ENCODE measurements at regions of chr2 and their contacts with region 1.

Region 1: DNA sequence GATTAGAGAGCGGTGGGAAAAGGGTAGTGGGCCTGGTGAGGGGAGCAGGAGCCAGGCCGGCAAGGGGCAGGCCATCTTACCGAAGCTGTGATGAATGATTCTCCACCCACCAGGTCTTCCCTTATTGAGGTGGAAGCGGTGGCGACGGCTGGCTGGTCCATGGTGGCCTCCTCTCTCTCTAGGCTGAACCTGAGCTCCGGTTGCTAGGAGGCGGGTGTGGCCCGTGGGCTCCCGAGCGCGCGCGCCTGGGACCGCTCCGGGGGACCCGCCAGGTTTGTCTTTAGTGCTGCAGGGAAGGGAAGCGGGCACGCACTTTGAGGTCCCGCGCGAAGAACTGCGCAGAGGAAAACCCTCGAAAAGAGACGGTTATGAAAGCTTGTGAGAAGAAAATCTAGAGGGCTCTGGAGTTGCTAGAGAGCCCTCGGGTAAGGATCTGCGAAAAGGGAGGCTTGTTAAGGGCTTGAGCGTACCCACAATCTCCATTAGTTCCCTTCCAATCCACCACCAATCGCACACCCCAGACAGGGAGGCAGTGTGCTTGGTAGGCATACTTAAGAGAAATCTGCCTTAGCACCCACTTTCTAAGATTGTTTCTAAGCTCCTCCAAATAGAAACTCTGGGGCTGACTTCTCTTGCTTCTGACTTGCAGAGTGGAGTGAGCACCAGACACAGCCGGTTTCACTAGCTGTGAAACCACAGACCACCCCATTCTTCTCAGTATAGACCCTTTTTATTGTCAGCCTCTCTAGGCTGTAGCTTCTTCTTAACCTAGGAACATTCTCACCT is at the start of gene STPG4:
- DNase-seq: no peak
- total RNA-seq, gene STPG4: 0.52 TPM in 1 of 2 donors, not detected in the other

Region 2: DNA sequence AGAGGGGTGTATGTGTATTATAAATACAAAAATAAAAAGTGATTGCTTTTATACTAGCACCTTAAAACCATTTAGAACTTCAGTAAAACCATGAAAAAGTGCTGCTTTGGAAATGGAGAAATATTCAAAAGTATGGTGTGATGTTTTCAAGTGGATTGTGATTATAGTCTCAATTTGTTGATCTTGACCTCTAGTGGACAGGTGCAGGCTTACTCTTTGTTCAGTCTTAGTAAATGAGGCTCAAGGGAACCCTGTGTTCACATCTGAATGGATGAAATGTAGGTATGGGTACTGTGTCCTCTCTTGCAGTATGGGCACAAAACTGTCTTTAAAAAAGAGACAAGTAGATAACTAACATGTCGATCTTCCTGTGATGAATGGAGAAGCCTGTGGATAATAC is 385.5 kb before region 1 on chr2:
- intact Hi-C with region 1: no loop called
- DNase-seq: no peak

Region 3: DNA sequence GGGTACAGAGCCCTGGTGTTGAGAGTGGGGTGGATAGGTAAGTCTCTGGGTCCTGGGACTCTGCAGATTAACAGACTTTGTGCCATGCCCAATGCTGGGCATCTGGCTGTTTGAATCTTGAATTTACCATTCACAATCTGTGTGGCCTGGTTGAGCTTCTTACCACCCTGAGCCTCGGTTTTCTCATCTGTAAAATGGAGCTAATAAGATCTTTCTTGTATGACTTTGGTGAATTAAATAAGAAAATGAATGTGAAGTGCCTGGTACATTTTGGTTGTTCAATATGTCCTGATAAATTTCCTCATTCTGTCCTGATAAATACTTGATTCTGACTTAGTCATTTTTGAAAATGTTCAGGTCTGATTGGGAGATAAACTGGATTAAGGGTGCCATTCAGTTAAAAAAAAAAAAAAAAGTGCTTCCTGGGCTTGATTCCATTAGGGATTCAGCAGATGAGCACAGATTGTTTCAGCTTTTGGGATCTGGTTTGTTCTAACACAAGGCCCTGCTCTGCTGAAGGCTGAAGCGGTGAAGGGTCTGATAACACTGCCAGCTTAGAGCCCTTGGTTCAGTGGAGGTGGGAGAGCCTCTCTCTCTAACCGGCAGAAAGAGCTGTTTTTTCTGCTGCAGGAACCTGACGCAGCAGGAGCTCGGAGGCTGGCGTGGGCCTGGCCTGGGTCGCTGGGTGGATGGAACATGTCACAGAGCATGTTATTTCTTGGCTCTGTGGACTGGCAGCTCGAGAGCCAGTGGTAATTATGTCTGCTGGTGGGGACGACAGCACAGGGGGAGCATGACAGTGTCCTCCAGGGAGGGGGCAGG is 155.2 kb before region 1 on chr2:
- intact Hi-C with region 1: loop called in 1 of 2 experiments (anchors 5 kb)
- DNase-seq: no peak

Region 4: GRCh38 chr2:47272031-47272864 is 117.0 kb after region 1 on chr2:
- intact Hi-C with region 1: no loop called
- DNase-seq: peak; percentile 94